SK-N-SH (cell line): ENCODE measurements at regions of chr14 and their contacts with region 1.

Region 1: DNA sequence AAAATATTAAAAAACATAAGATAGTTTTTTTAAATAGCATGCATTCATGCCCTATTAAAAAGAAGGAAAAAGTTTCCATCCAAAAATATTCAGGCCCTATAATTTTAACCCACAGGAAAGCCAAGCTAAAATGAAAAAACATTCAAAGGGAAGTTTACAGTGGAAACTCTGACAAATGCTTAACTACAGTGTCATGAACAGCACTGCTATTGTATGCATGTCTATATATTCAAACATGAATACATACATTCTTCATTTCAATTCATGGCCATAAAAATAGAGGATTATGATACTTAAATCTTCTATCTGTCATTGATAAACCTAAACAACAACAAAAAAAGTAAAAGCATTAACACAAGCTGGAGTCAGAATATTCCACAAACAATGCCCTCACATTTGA is 67.4 kb downstream of the PPP2R5E start:
- DNase-seq: no peak
- H3K4me3 ChIP-seq: no peak overlapping the region
- H3K27ac ChIP-seq: no peak overlapping the region
- H3K4me1 ChIP-seq: peaks cover 21 to 28% of the 10 kb centered on the region in 2 experiments; a peak in 3 of 4 replicates
- H3K27me3 ChIP-seq: no peaks in the 10 kb centered on the region
- CTCF ChIP-seq: no peak
- EP300 ChIP-seq: no peak
- RAD21 ChIP-seq: no peak

Region 2: GRCh38 chr14:63493246-63493645 is 17.5 kb after region 1 on chr14:
- CTCF ChIA-PET with region 1: interaction called, 11 read pairs
- POLR2A ChIA-PET with region 1: no interaction called
- DNase-seq: peak; percentile 55
- H3K4me3 ChIP-seq: no peak overlapping the region
- H3K27ac ChIP-seq: peak overlapping the region; percentile 51 to 92
- H3K4me1 ChIP-seq: peaks cover 6 to 19% of the 10 kb centered on the region in 2 experiments
- H3K27me3 ChIP-seq: no peaks in the 10 kb centered on the region
- CTCF ChIP-seq: peak; percentile 39
- EP300 ChIP-seq: no peak
- RAD21 ChIP-seq: peak; percentile 65